Naive thymus-derived CD4-positive, alpha-beta T cell (primary cell): ENCODE measurements at regions of chr10 and their contacts with region 1.

Region 1: DNA sequence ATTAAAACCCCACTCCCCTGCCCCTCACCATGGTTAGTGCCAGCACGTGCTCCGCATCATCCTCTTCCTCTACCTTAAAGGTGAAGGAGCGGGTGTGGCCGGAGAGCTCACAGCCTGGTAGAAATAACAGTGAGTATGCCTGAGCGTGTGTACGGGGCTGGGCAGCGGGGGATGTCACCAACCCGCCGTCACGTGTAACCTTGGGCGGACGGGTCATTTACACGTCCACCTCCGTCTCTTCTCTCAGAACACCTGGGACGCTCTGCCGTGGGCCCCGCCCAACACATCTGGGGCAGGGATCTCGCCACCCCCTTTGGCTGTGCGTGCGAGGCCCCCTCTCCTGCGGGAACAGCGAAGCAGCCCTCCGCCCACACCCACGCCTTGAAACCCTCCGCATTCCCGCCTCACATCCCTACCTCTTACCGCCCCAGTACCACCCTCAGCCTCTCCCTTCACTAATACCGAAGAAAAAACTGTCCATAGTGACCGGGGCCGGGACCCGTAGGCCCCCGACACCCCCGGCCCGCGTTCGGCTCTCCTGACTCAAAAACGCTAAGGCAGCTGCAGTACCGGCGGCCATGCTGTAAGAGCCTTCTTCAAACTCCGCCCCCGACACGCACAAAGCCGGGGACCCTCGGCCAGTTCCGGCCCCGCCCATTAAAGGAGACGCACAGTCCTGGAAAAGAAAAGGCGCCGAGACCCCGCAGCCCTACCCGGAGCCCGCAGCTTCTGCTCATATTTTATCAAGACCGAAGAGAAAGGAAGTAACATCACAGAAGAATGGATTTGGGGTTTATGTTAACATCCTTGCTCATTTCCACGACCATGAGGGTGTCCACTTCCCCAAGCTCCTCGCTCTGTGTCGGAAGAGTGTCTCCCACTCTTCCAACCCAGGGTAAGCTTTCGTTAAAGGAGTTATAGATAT is at the start of gene NPM3:
- DNase-seq: peak in 8 of 9 donors; percentile 68 to 84 (median 77)
- ATAC-seq: peak; percentile 82
- H3K4me3 ChIP-seq: peak within 1 kb of the TSS; percentile 68
- H3K4me3 Mint-ChIP-seq: peak within 1 kb of the TSS; percentile 92 to 100 (median 99)
- H3K27ac ChIP-seq: peak within 1 kb of the TSS; percentile 81
- H3K27ac Mint-ChIP-seq: peak within 1 kb of the TSS; percentile 65 to 98 (median 96)
- H3K4me1 ChIP-seq: peaks cover 32 to 49% of the 10 kb centered on the region in 2 donors
- H3K4me1 Mint-ChIP-seq: peaks cover 36 to 76% (median 61%) of the 10 kb centered on the region in 7 donors
- H3K27me3 ChIP-seq: peaks cover 0 to 11% of the 10 kb centered on the region in 2 donors
- H3K27me3 Mint-ChIP-seq: peaks cover 8 to 17% (median 10%) of the 10 kb centered on the region in 5 donors
- total RNA-seq, gene NPM3: 10.9 to 31.3 (median 16.2) TPM

Region 2: GRCh38 chr10:101161494-101162299 is 621.4 kb before region 1 on chr10:
- CTCF ChIA-PET with region 1: interaction called, 3 read pairs
- POLR2A ChIA-PET with region 1: no interaction called
- intact Hi-C with region 1: loop called in 1 of 2 experiments (anchors 1 kb)
- DNase-seq: peak; percentile 45 to 71 (median 65)
- ATAC-seq: peak; percentile 96
- H3K4me3 ChIP-seq: no peak overlapping the region
- H3K4me3 Mint-ChIP-seq: peak overlapping the region in 5 of 10 donors; percentile 20 to 51 (median 30)
- H3K27ac ChIP-seq: no peak overlapping the region
- H3K27ac Mint-ChIP-seq: peak overlapping the region in 1 of 9 donors; percentile 26
- H3K4me1 ChIP-seq: no peaks in the 10 kb centered on the region
- H3K4me1 Mint-ChIP-seq: peaks cover 9 to 16% (median 12%) of the 10 kb centered on the region in 7 donors
- H3K27me3 ChIP-seq: peaks cover 6 to 15% of the 10 kb centered on the region in 2 donors
- H3K27me3 Mint-ChIP-seq: peaks cover 49 to 78% (median 70%) of the 10 kb centered on the region in 5 donors

Region 3: GRCh38 chr10:101602761-101603398 is 180.2 kb before region 1 on chr10:
- CTCF ChIA-PET with region 1: interaction called, 13 read pairs
- POLR2A ChIA-PET with region 1: no interaction called
- intact Hi-C with region 1: loop called (anchors 1 kb)
- DNase-seq: peak; percentile 20 to 80 (median 45)
- ATAC-seq: peak; percentile 86
- H3K4me3 ChIP-seq: no peak overlapping the region
- H3K4me3 Mint-ChIP-seq: no peak overlapping the region
- H3K27ac ChIP-seq: no peak overlapping the region
- H3K27ac Mint-ChIP-seq: peak overlapping the region in 4 of 9 donors; percentile 12 to 81 (median 48)
- H3K4me1 ChIP-seq: no peaks in the 10 kb centered on the region
- H3K4me1 Mint-ChIP-seq: peaks cover 0 to 3% (median 0%) of the 10 kb centered on the region in 7 donors
- H3K27me3 ChIP-seq: no peaks in the 10 kb centered on the region
- H3K27me3 Mint-ChIP-seq: no peaks in the 10 kb centered on the region

Region 4: DNA sequence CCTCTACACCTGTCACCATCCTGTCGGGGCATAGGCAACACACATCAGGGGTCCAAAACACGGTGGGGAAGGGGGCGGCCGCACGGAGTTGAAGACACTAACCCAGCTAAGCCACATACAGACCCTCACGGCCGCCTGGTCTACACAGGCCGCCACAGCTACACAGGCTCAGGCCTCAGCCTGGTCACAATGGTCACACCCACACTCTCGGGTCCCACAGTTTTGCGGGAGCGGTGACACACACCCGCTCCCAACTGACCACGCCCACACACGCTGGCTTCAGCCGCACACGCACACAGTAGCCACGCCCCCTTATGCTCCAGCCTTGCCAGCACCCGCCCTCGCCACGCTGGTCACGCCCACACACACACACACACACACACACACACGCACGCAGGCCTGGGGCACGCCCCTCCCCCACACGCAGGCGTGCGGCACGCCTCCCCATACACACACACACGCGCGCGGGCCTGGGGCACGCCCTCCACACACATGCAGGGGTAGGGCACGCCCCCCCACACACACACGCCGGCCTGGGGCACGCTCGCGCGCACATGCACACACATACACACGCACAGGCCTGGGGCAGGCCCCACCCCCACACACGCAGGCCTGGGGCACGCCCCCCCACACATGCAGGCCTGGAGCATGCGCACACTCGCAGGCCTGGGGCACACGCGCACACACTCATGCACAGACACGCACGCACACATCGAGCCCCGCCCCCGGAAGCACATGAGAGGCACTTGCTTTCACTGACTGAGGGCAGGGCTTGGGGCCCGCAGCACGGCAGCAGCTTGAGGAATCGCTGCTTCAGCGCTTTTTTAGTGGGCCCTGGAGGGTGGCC is 47.5 kb after region 1 on chr10:
- CTCF ChIA-PET with region 1: interaction called, 3 read pairs
- POLR2A ChIA-PET with region 1: interaction called, 4 read pairs
- intact Hi-C with region 1: loop called in 1 of 2 experiments (anchors 5 kb)
- DNase-seq: peak; percentile 89 to 98 (median 95)
- ATAC-seq: peak; percentile 90
- H3K4me3 ChIP-seq: peak overlapping the region; percentile 66
- H3K4me3 Mint-ChIP-seq: peak overlapping the region; percentile 79 to 94 (median 88)
- H3K27ac ChIP-seq: peak overlapping the region; percentile 85
- H3K27ac Mint-ChIP-seq: peak overlapping the region; percentile 94 to 100 (median 99)
- H3K4me1 ChIP-seq: peaks cover 22 to 53% of the 10 kb centered on the region in 2 donors
- H3K4me1 Mint-ChIP-seq: peaks cover 41 to 59% (median 53%) of the 10 kb centered on the region in 7 donors
- H3K27me3 ChIP-seq: no peaks in the 10 kb centered on the region
- H3K27me3 Mint-ChIP-seq: peaks cover 0 to 4% (median 0%) of the 10 kb centered on the region in 5 donors

Region 5: GRCh38 chr10:102009801-102010425 is 226.8 kb after region 1 on chr10:
- CTCF ChIA-PET with region 1: interaction called, 4 read pairs
- POLR2A ChIA-PET with region 1: no interaction called
- intact Hi-C with region 1: loop called in 1 of 2 experiments (anchors 1 kb)
- DNase-seq: peak in 8 of 9 donors; percentile 33 to 66 (median 52)
- ATAC-seq: peak; percentile 86
- H3K4me3 ChIP-seq: no peak overlapping the region
- H3K4me3 Mint-ChIP-seq: no peak overlapping the region
- H3K27ac ChIP-seq: no peak overlapping the region
- H3K27ac Mint-ChIP-seq: peak overlapping the region in 4 of 9 donors; percentile 12 to 39 (median 20)
- H3K4me1 ChIP-seq: no peaks in the 10 kb centered on the region
- H3K4me1 Mint-ChIP-seq: peaks cover 0 to 13% (median 4%) of the 10 kb centered on the region in 7 donors
- H3K27me3 ChIP-seq: no peaks in the 10 kb centered on the region
- H3K27me3 Mint-ChIP-seq: no peaks in the 10 kb centered on the region

Region 6: GRCh38 chr10:102064868-102065560 is 281.9 kb after region 1 on chr10 and contains the start of gene HPS6:
- CTCF ChIA-PET with region 1: no interaction called
- POLR2A ChIA-PET with region 1: no interaction called
- intact Hi-C with region 1: loop called (anchors 2 kb)
- DNase-seq: peak; percentile 73 to 94 (median 81)
- ATAC-seq: peak; percentile 98
- H3K4me3 ChIP-seq: peak within 1 kb of the TSS; percentile 82
- H3K4me3 Mint-ChIP-seq: peak within 1 kb of the TSS; percentile 79 to 91 (median 89)
- H3K27ac ChIP-seq: peak within 1 kb of the TSS; percentile 93
- H3K27ac Mint-ChIP-seq: peak within 1 kb of the TSS; percentile 85 to 97 (median 93)
- H3K4me1 ChIP-seq: peaks cover 14 to 23% of the 10 kb centered on the region in 2 donors
- H3K4me1 Mint-ChIP-seq: peaks cover 23 to 43% (median 36%) of the 10 kb centered on the region in 7 donors
- H3K27me3 ChIP-seq: no peaks in the 10 kb centered on the region
- H3K27me3 Mint-ChIP-seq: no peaks in the 10 kb centered on the region
- total RNA-seq, gene HPS6: 12.1 to 24.2 (median 20.9) TPM

Region 7: GRCh38 chr10:102615361-102615760 is 832.3 kb after region 1 on chr10:
- CTCF ChIA-PET with region 1: no interaction called
- POLR2A ChIA-PET with region 1: no interaction called
- intact Hi-C with region 1: no loop called
- DNase-seq: no peak
- ATAC-seq: no peak
- H3K4me3 ChIP-seq: no peak overlapping the region
- H3K4me3 Mint-ChIP-seq: no peak overlapping the region
- H3K27ac ChIP-seq: no peak overlapping the region
- H3K27ac Mint-ChIP-seq: peak overlapping the region in 6 of 9 donors; percentile 29 to 84 (median 53)
- H3K4me1 ChIP-seq: peaks cover 0 to 35% of the 10 kb centered on the region in 2 donors
- H3K4me1 Mint-ChIP-seq: peaks cover 7 to 36% (median 32%) of the 10 kb centered on the region in 7 donors
- H3K27me3 ChIP-seq: no peaks in the 10 kb centered on the region
- H3K27me3 Mint-ChIP-seq: no peaks in the 10 kb centered on the region